Endothelial cell of umbilical vein (primary cell): ENCODE measurements at regions of chr15 and their contacts with region 1.

Region 1: GRCh38 chr15:52078876-52079700 is 33.5 kb downstream of the BCL2L10 start:
- DNase-seq: peak; percentile 63
- H3K4me3 ChIP-seq: no peak overlapping the region
- H3K27ac ChIP-seq: no peak overlapping the region
- H3K4me1 ChIP-seq: peaks cover 3% of the 10 kb centered on the region
- H3K27me3 ChIP-seq: no peaks in the 10 kb centered on the region
- CTCF ChIP-seq: peak; percentile 86 to 92
- POLR2A ChIP-seq: no peak

Region 2: DNA sequence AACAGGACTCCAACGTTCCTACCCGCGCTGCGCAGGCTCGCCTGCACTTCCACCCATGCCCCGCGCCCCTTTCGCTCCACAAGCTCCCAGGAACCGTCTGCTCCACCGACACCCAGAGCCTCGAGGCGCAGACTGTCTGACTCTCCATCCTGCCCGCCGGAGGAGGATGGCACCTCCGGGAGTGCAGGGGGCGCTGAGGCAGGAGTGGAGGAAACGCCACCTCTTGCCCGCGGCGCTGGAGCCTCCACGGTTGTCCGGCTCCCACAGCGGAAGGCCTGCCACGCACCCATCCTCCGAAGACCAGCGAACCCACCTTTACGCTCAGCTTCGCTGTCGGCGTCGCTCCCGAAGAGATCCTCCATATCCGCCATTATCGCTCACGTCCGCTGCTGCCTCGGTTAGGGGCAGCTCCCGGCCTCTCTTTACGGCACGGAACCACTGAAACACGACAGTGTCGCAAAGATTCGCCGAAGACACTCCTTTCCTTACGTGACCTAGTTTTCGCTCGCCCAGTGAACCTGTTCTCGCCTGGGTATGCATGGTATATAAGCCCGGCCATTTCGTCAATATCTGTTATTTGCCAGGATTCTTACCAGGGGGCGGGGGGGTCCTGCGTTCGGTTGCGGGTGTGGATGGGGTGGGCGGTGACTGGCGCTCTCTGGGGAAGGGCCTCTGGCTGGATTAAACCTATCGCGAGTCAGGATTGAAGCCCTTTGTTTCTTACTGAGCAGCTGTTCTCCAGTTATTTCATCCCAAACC is 107.5 kb before region 1 on chr15 and contains the start of gene LEO1:
- CTCF ChIA-PET with region 1: interaction called, 23 read pairs
- POLR2A ChIA-PET with region 1: no interaction called
- dilution Hi-C with region 1: no loop called
- intact Hi-C with region 1: no loop called
- DNase-seq: peak; percentile 97
- H3K4me3 ChIP-seq: peak within 1 kb of the TSS; percentile 54 to 81 (median 61)
- H3K27ac ChIP-seq: peak within 1 kb of the TSS; percentile 68
- H3K4me1 ChIP-seq: peaks cover 12% of the 10 kb centered on the region
- H3K27me3 ChIP-seq: no peaks in the 10 kb centered on the region
- CTCF ChIP-seq: peak in 1 of 2 donors; percentile 42
- POLR2A ChIP-seq: peak; percentile 92
- total RNA-seq, gene LEO1: 22.6 and 28.0 TPM in 2 replicates

Region 3: DNA sequence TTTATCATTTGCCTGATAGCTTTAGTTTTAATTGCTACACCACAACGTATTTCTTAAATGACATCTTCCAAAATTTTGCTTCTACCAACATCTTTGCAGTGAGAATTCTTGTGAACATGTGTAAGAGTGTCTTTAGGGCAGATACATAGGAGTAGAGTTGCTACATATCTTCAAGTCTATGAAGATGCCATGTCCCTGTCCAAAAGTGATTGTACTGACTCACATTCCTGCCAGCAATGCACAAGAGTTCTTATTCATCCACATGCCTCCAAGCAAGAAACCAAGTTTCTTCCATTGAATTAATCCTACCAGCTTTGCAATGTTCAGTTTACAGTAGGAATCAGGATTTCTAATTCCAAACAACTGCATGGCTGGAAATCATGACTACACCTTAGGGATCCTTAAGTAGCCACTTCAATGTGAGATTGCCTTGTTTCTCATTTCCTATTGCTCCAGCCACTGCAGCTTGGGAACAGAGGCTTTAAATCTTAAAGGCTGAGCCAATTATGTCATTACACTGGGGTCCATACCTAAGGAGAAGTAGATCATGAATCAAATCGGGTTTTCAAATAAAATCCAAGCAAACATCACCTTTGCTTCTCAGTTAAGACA is 11.0 kb before region 1 on chr15:
- CTCF ChIA-PET with region 1: interaction called, 19 read pairs
- POLR2A ChIA-PET with region 1: no interaction called
- dilution Hi-C with region 1: no loop called
- intact Hi-C with region 1: no loop called
- DNase-seq: no peak
- H3K4me3 ChIP-seq: no peak overlapping the region
- H3K27ac ChIP-seq: no peak overlapping the region
- H3K4me1 ChIP-seq: no peaks in the 10 kb centered on the region
- H3K27me3 ChIP-seq: no peaks in the 10 kb centered on the region
- CTCF ChIP-seq: no peak
- POLR2A ChIP-seq: no peak

Region 4: GRCh38 chr15:52124270-52124880 is 45.3 kb after region 1 on chr15:
- CTCF ChIA-PET with region 1: interaction called, 23 read pairs
- POLR2A ChIA-PET with region 1: no interaction called
- dilution Hi-C with region 1: no loop called
- intact Hi-C with region 1: no loop called
- DNase-seq: peak; percentile 92
- H3K4me3 ChIP-seq: no peak overlapping the region
- H3K27ac ChIP-seq: peak overlapping the region; percentile 72
- H3K4me1 ChIP-seq: peaks cover 12% of the 10 kb centered on the region
- H3K27me3 ChIP-seq: no peaks in the 10 kb centered on the region
- CTCF ChIP-seq: no peak
- POLR2A ChIP-seq: peak; percentile 23

Region 5: GRCh38 chr15:52208306-52208946 is 129.3 kb after region 1 on chr15:
- CTCF ChIA-PET with region 1: interaction called, 13 read pairs
- POLR2A ChIA-PET with region 1: no interaction called
- dilution Hi-C with region 1: no loop called
- intact Hi-C with region 1: no loop called
- DNase-seq: peak; percentile 73
- H3K4me3 ChIP-seq: no peak overlapping the region
- H3K27ac ChIP-seq: no peak overlapping the region
- H3K4me1 ChIP-seq: peaks cover 17% of the 10 kb centered on the region
- H3K27me3 ChIP-seq: no peaks in the 10 kb centered on the region
- CTCF ChIP-seq: peak; percentile 71 to 86
- POLR2A ChIP-seq: no peak